K562 (cell line): ENCODE measurements at regions of chrX and their contacts with region 1.

Region 1: GRCh38 chrX:107205770-107206696 is at the starts of genes DNAAF6 and NUP62CL:
- DNase-seq: peak; percentile 93 to 96 (median 95)
- ATAC-seq: peak; percentile 94
- H3K4me3 ChIP-seq: peak within 1 kb of the TSS; percentile 62
- H3K27ac ChIP-seq: peak within 1 kb of the TSS; percentile 85
- H3K4me1 ChIP-seq: peaks cover 4 to 9% of the 10 kb centered on the region in 2 experiments; a peak in 4 of 5 replicates
- H3K27me3 ChIP-seq: no peaks in the 10 kb centered on the region
- CTCF ChIP-seq: no peak
- EP300 ChIP-seq: no peak; the same call in 1 of the 2 replicates
- POLR2A ChIP-seq: peak; percentile 84
- RAD21 ChIP-seq: no peak
- polyA plus RNA-seq, gene DNAAF6: 0.06 to 0.17 TPM
- polyA plus RNA-seq, gene NUP62CL: 42.7 to 44.6 TPM

Region 2: DNA sequence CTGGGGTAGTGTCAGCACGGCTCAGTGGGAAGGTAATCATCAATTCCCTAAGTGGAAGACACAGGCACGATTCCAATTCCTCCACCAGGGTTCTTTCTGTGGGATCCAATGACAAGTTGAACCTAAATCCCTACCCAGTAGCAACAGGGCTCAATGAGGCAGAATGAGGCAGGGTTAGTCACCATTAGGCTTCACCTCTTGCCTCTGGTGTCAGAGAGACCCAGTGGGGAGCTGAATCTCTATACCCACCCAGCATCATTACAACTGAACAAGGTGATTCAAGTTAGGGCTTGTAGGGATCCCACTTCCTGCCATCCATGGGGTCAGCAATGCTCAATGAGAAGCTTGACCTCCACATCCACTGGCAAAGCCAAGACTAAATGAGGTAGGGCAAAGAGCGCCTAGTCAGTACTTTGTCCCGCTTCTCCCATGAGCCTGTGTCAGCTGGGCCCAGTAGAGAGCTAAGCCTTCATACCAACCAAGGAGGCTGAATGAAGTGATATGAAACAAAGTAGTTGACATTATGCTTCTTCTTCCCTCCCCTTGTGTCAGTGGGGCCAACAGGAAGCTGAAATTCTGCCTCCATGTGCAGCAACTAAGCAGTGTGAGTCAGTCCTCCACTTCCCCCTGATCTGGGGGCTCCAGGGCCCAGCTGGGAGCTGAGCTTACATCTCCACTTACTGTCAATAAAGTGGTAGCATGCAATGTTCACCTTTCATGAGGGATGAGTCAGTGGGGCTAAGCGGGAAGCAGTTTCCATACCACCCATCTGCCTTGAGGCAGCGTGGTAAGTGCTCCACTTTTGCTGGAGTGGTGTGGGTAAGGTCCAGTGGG is 51.0 kb before region 1 on chrX:
- CTCF ChIA-PET with region 1: no interaction called
- POLR2A ChIA-PET with region 1: interaction called, 7 read pairs
- in situ Hi-C with region 1: no loop called
- intact Hi-C with region 1: loop called (anchors 5 kb)
- DNase-seq: peak; percentile 17 to 67 (median 24)
- ATAC-seq: peak; percentile 84
- H3K4me3 ChIP-seq: peak overlapping the region; percentile 33
- H3K27ac ChIP-seq: peak overlapping the region; percentile 91
- H3K4me1 ChIP-seq: peaks cover 5 to 28% of the 10 kb centered on the region in 2 experiments; a peak in 3 of 5 replicates
- H3K27me3 ChIP-seq: no peaks in the 10 kb centered on the region
- CTCF ChIP-seq: no peak
- EP300 ChIP-seq: no peak
- POLR2A ChIP-seq: 0 out of 2 replicates have a peak, but pooled peaks have one; percentile 34
- RAD21 ChIP-seq: peak in 1 of 2 experiments; percentile 3; a peak in 1 of 4 replicates

Region 3: GRCh38 chrX:107168257-107168656 is 37.8 kb before region 1 on chrX:
- CTCF ChIA-PET with region 1: no interaction called
- POLR2A ChIA-PET with region 1: no interaction called
- in situ Hi-C with region 1: no loop called
- intact Hi-C with region 1: loop called (anchors 2 kb)
- DNase-seq: peak in 2 of 4 experiments; percentile 57 to 68
- ATAC-seq: peak; percentile 89
- H3K4me3 ChIP-seq: no peak overlapping the region
- H3K27ac ChIP-seq: peak overlapping the region; percentile 9; the same call in 1 of the 3 replicates
- H3K4me1 ChIP-seq: peaks cover 0 to 15% of the 10 kb centered on the region in 2 experiments; a peak in 3 of 5 replicates
- H3K27me3 ChIP-seq: no peaks in the 10 kb centered on the region
- CTCF ChIP-seq: no peak
- EP300 ChIP-seq: peak; percentile 74; the same call in 1 of the 2 replicates
- POLR2A ChIP-seq: no peak
- RAD21 ChIP-seq: no peak